ENCODE measurements at regions of chr3 and their contacts with region 1.

Region 1: DNA sequence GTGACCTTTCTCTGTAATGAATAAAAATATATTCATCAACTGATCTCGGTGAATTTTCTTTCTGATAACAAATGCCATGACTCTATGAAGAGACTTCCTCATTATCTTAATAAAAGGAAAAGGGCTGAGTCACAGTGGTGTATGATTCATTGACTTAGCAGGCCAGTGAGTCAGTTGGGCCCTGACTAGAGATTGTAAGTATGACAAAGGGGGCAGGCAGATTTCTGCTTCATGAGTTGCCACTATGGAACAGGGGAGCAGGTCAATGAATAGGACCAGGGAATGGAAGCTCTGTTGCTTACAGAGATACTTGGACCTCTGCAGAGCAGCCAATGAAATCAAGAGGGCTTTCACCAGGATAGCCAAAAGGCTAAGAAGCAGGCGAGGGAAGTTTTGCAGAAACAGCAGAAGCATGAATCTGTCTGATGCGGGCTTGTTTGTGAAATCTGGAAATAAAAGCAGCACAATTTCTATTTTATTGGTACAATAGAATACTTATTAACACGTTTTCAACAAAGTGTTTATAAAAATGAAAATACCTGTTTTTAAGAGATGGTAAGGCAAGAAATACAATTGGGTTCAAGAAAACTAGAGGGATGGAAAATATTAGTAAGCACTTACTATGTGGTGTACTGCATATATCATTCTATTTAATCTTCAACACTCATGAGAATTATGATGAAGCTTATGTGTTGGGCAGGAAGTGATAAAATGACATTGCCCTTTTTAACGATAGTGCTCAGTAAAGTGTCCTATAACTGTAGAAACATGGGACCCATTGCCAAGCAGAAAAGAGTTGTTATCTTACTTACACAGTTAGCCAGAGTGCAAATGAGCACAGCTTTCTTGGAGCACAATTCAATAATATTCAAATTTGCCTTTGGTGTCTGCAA is 169.8 kb upstream of the MYRIP start:
- DNase-seq: peak; percentile 12
- H3K4me3 Mint-ChIP-seq: peak overlapping the region; percentile 58
- H3K27ac Mint-ChIP-seq: peak overlapping the region; percentile 90
- H3K4me1 Mint-ChIP-seq: peaks cover 28% of the 10 kb centered on the region
- H3K27me3 Mint-ChIP-seq: peaks cover under 1% of the 10 kb centered on the region

Region 2: GRCh38 chr3:39541917-39542329 is 97.7 kb before region 1 on chr3:
- intact Hi-C with region 1: loop called (anchors 2 kb)
- DNase-seq: no peak
- H3K4me3 Mint-ChIP-seq: no peak overlapping the region
- H3K27ac Mint-ChIP-seq: no peak overlapping the region
- H3K4me1 Mint-ChIP-seq: peaks cover 17% of the 10 kb centered on the region
- H3K27me3 Mint-ChIP-seq: peaks cover 4% of the 10 kb centered on the region

Region 3: DNA sequence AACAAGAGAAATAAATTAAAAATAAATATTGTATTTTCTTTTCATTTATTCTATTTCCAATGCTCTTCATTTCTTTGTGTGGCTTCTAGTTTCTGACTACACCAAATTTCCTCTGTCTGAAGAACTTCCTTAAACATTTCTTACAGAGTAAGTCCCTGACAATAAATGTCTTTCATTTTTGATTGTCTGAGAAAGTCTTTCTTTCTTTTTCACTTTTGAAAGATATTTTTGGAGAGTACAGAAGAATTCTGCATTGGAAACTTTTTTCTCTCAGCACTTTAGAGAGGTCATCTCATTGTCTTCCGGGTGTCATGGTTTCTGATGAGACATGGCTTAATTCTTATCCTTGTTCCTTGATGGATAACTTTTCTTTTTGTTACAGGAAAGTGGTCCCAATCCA is 52.5 kb before region 1 on chr3:
- intact Hi-C with region 1: no loop called
- DNase-seq: no peak
- H3K4me3 Mint-ChIP-seq: no peak overlapping the region
- H3K27ac Mint-ChIP-seq: no peak overlapping the region
- H3K4me1 Mint-ChIP-seq: no peaks in the 10 kb centered on the region
- H3K27me3 Mint-ChIP-seq: peaks cover 2% of the 10 kb centered on the region

Region 4: DNA sequence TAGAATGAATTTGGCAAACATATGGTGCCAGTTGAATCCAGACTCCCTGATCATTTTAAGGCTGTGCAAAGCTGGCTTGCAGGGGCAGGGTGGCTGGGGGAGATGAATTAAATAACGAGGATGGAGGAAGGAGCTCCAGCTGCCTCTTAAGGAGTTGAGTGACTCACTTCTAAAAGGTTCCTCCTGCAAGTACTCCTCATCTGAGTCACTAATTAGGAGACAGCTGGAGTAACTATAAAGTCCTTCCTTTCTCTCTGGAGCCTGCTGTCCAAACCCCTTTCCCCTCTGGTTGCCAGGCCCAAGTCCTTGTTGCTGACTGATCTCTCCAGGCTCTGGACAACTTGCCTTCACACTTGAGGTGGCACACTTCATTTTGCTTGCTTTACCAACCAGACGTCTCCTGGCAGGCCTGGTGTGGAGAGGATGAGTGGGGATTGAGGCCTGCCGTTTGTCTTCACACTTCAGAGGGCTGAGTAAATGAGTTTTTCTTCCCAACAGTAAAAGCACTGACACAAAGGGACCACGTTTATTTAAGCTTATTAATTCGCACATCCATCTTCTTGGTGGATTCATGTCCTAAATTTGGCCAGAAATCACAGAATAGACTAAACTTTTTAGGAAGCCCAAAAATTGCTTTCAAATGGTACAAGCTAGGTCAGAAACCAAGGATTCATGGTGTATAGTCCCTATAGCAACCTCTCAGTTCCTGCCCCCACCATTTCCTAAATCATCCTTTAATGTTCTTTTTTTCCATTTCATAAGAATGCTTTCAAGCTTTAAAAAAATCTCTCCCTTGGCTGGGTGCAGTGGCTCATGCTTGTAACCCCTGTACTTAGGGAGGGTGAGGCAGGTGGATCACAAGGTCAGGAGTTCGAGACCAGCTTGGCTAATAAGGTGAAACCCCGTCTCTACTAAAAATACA is 79.3 kb after region 1 on chr3:
- intact Hi-C with region 1: loop called (anchors 10 kb)
- DNase-seq: no peak
- H3K4me3 Mint-ChIP-seq: no peak overlapping the region
- H3K27ac Mint-ChIP-seq: no peak overlapping the region
- H3K4me1 Mint-ChIP-seq: no peaks in the 10 kb centered on the region
- H3K27me3 Mint-ChIP-seq: no peaks in the 10 kb centered on the region

Region 5: GRCh38 chr3:40574661-40575060 is 935.1 kb after region 1 on chr3:
- intact Hi-C with region 1: no loop called
- DNase-seq: no peak
- H3K4me3 Mint-ChIP-seq: no peak overlapping the region
- H3K27ac Mint-ChIP-seq: no peak overlapping the region
- H3K4me1 Mint-ChIP-seq: no peaks in the 10 kb centered on the region
- H3K27me3 Mint-ChIP-seq: peaks cover 17% of the 10 kb centered on the region

Measured in activated T-helper 2 cell treated with anti-CD3 and anti-CD28 coated beads, Interferon-gamma antibody, Interleukin-2, Interleukin-4, amounts not matched to agents 10 μg/mL and 5 μg/mL and 100 μg/mL, durations not matched to agents 14 hours and 24 hours and 36 hours (primary cell).